CD14-positive monocyte (primary cell): ENCODE measurements at regions of chr15 and their contacts with region 1.

Region 1: DNA sequence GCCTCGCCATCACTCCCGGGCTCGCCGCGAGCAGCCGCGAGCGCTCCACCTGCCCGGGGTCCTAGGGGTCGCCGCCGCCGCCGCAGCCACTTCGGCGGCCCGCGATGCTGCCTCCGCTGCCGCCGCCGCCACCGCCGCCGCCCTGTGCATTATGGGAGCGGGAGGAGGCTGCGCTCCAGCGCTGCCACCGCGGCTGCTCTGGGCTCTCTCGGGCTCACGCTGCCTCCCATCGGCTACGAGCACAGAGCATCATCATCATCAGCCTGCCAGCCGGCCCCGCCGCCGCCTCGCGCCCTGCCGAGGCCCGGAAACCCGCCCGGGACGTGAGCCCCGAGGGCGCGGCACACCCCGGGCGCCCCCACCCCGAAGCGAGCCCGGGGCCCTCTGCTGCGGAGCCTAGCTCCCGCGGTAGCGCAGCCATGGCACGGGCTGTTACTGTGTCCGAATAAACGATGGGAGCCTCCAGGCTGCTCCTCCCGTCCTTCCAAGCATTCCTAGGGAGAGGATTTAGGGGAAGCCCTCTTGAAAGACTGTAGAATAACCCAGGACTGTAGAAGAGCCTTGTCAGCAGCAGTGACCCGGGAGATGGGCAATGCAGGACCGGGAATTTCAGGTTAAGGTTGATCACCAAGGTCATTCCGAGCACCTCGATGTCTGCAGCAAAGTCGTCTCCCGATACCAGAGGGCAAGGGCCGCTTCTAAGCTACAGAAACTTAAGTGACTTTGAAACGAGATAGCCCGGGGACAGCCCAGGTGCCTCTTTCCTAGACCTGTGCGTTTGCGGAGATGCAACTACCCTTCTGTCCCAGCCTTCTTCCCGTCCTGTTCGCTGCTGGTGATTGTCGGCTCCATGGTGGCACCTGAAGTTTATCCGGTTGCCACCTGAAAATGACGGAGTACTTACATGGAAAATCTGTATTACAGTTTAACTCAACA is 579 bp upstream of the MYO5A start:
- DNase-seq: peak; percentile 60 to 65 (median 60)
- H3K4me3 ChIP-seq: peak overlapping the region; percentile 33 to 91 (median 65)
- H3K4me3 Mint-ChIP-seq: peak overlapping the region; percentile 75 to 91
- H3K27ac ChIP-seq: peak overlapping the region in 1 of 2 donors; percentile 67
- H3K27ac Mint-ChIP-seq: peak overlapping the region in 5 of 7 donors; percentile 11 to 86 (median 33)
- H3K4me1 ChIP-seq: peaks cover 18 to 27% of the 10 kb centered on the region in 2 donors
- H3K4me1 Mint-ChIP-seq: peaks cover 31% of the 10 kb centered on the region
- H3K27me3 ChIP-seq: peaks cover 8 to 18% of the 10 kb centered on the region in 2 donors
- H3K27me3 Mint-ChIP-seq: peaks cover 14 to 18% (median 17%) of the 10 kb centered on the region in 3 donors
- CTCF ChIP-seq: no peak

Region 2: DNA sequence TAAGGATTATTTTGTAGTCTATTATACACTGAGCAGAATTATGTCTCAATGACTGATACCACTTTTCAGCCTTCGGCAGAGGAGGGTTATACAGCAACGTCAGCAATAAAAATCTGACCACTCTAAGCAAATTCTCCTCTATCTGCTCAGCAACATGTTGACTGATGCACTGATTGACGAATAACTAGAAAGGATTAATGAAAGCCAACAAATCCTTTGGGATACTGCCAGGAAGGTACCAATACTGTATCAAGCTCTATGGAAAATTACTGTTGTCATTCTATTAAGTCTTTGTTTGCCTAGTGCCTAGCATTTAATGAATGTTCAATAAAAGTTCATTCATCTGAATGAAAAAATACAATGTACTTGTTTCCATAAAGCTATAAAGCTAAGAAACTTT is 34.3 kb after region 1 on chr15:
- intact Hi-C with region 1: loop called in 1 of 2 experiments (anchors 5 kb)
- DNase-seq: no peak
- H3K4me3 ChIP-seq: no peak overlapping the region
- H3K4me3 Mint-ChIP-seq: no peak overlapping the region
- H3K27ac ChIP-seq: peak overlapping the region in 1 of 2 donors; percentile 4
- H3K27ac Mint-ChIP-seq: no peak overlapping the region
- H3K4me1 ChIP-seq: peaks cover 27 to 38% of the 10 kb centered on the region in 2 donors
- H3K4me1 Mint-ChIP-seq: peaks cover 43% of the 10 kb centered on the region
- H3K27me3 ChIP-seq: no peaks in the 10 kb centered on the region
- H3K27me3 Mint-ChIP-seq: peaks cover 0 to 2% (median 0%) of the 10 kb centered on the region in 3 donors
- CTCF ChIP-seq: no peak

Region 3: DNA sequence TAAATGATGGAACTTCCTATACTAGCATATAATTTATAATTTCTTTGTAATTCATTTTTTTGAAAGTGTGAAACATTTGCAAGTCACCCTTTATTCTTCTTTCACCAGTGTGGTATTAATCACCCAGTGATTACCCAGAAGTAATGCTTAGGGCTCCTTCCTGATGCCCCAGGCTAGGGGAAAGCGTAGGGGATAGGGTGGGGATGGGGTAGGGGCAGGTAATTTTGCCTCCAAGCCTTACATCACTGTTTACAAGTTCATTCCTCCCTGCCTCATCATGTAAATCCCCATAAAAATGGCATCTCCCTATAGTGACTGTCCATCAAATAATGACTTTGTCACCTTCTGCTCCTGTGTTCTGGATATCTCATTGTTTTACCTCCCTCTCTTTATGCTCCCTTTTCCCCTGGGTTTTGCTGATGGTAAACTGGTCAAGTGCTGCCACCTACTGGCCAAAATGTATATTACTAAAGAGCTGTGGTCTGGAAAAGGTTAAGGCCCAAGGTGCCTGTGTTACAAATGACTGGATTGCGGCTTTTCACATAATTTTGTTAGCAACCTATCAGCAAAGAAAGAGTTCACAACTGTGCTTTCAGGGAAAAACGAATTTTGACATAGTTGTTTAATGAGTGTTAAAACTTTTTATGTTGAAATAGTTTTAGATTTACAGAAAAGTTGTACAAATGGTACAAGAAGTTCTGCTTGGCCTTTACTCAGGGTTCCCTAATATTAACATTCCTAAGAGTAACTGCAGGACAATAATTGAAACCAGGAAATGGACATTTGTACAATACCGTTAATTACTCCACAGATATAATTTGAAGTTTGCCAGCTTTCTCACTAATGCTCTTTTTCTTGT is 206.2 kb after region 1 on chr15:
- intact Hi-C with region 1: no loop called
- DNase-seq: peak; percentile 64 to 67 (median 66)
- H3K4me3 ChIP-seq: no peak overlapping the region
- H3K4me3 Mint-ChIP-seq: no peak overlapping the region
- H3K27ac ChIP-seq: no peak overlapping the region
- H3K27ac Mint-ChIP-seq: no peak overlapping the region
- H3K4me1 ChIP-seq: no peaks in the 10 kb centered on the region
- H3K4me1 Mint-ChIP-seq: peaks cover 8% of the 10 kb centered on the region
- H3K27me3 ChIP-seq: no peaks in the 10 kb centered on the region
- H3K27me3 Mint-ChIP-seq: peaks cover 0 to 6% (median 3%) of the 10 kb centered on the region in 3 donors
- CTCF ChIP-seq: peak; percentile 86